Esophagus muscularis mucosa (tissue), 4 donors: ENCODE measurements at regions of chr3 and their contacts with region 1.

Region 1: DNA sequence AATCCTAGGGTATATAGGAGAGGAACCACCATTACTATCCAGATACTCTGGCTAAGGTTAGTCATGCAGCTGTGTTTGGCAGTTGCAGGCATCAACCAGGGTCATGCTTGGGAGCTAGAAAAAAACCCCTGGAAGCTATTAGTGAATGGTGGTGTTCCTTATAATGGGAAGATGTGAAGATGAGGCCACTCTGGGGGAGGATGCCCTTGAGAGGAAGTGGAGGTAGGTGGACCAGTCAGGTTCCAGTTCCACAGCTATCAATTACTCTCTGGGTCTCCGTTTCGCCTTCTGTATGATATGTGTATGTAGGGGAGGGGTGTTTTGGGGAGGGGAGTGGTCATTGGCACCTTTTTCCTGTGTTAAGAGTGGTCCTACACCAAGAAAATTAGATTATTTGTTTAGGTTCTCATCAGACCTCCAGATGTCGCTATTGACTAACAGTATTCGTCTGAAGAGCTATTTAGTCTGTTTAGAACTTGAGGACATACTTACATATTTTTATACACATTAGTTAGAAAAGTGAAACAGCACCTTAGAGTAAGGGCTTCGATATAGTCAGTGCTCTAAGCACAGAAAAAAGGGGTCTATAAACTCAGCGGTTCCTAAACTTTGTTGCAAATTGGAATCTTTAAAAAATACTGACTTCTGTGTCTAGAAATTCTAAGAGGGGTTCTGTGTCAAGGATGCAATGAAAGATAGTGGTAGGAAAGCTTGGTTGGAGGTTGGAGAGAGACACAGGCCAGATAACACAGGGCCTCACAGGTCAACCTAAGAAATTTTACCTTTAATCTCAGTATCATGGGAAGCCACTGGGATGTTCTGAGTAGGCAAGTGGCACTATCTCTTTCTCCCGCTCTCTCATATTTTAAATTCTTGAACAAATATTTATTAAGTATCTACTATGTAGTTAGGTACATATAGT is 9.1 kb upstream of the HPS3 start:
- DNase-seq: no peak
- H3K4me3 ChIP-seq: no peak overlapping the region
- H3K27ac ChIP-seq: no peak overlapping the region
- H3K4me1 ChIP-seq: peaks cover 0 to 9% (median 5%) of the 10 kb centered on the region in 4 donors
- H3K27me3 ChIP-seq: no peaks in the 10 kb centered on the region
- CTCF ChIP-seq: peak; percentile 56 to 67 (median 65)
- EP300 ChIP-seq: no peak
- POLR2A ChIP-seq: no peak

Region 2: DNA sequence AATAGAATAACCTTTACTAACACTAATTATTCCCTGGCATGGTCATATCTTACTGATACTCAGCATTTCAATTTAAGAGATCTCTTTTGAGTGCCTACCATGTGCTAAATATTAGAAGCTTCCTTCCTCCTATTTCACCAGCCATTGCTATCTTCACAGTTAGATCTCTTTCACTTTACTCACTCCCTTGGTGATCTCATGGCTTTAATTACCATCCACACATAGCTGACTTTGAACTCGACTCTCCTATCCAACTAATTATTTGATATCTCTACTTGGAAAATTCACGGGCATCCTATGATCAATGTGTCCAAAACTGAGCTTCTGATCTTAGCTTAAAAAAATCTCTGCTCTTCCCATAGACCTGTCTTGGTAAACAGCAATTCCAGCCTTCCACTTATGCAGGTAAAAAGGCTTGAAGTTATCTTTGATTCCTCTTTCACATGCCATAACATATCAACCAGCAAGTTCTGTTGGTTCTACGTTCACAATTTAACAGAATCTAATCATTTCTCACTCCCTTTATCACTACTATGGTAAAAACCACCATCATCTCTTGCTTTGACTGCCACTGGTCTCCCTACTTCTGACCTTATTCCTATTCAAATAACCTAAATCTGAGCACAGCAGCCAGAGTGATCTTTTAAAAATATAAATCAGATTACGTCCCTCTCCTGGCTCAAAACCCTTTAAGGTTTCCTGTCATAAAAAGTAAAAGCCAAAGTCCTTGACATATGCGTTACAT is 75.8 kb before region 1 on chr3:
- intact Hi-C with region 1: no loop called
- DNase-seq: no peak
- H3K4me3 ChIP-seq: no peak overlapping the region
- H3K27ac ChIP-seq: no peak overlapping the region
- H3K4me1 ChIP-seq: peaks cover 0 to 5% (median 0%) of the 10 kb centered on the region in 4 donors
- H3K27me3 ChIP-seq: no peaks in the 10 kb centered on the region
- CTCF ChIP-seq: no peak
- EP300 ChIP-seq: no peak
- POLR2A ChIP-seq: no peak

Region 3: GRCh38 chr3:149273096-149273751 is 152.9 kb after region 1 on chr3:
- intact Hi-C with region 1: loop called (anchors 2 kb)
- DNase-seq: no peak
- H3K4me3 ChIP-seq: no peak overlapping the region
- H3K27ac ChIP-seq: no peak overlapping the region
- H3K4me1 ChIP-seq: peaks cover 0 to 15% (median 11%) of the 10 kb centered on the region in 4 donors
- H3K27me3 ChIP-seq: no peaks in the 10 kb centered on the region
- CTCF ChIP-seq: peak; percentile 92 to 97 (median 95)
- EP300 ChIP-seq: no peak
- POLR2A ChIP-seq: no peak